ENCODE measurements at regions of chr2 and their contacts with region 1.

Region 1: GRCh38 chr2:45024600-45025291 is 15.5 kb upstream of the SIX2 start:
- DNase-seq: no peak
- H3K4me3 ChIP-seq: no peak overlapping the region
- H3K27ac ChIP-seq: no peak overlapping the region
- H3K4me1 ChIP-seq: peaks cover 0 to 4% (median 0%) of the 10 kb centered on the region in 4 experiments; a peak in 1 of 7 replicates
- H3K27me3 ChIP-seq: peaks cover 0 to 2% (median 0%) of the 10 kb centered on the region in 4 experiments; a peak in 3 of 7 replicates
- CTCF ChIP-seq: peak in 1 of 3 experiments; percentile 16; a peak in 1 of 4 replicates
- EP300 ChIP-seq: no peak
- POLR2A ChIP-seq: no peak
- RAD21 ChIP-seq: peak; percentile 41 to 43; a peak in 3 of 4 replicates

Region 2: DNA sequence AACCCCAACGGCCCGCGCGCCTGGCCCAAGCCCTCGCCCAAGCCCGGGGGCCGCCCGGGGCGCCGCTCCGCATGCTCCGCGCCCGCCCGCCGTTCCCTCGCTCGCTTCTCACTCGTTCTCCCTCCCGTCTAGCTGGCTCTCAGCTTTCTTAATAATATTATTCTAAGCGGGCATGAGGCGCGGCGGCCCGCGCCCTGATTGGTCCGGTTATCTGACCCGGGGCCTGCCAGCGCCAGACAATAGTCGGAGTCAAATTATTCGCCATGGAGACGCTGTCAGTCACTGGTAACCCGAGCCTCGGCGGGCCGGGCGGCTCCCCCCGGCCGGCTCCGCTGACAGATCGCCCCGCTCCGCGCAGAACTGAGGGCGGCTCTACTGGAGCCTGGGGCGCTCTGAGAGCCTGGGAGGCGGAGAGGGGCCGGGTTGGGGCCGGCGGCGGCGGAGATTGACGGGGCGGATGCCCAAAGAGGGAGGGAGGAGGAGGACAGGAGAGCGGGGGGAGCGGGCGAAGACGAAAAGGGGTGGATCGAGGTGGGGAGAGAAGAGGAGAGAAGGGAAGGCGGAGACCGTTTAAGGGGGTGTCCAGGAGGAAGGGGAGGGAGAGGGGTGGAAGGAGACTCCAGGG is 15.3 kb before region 1 on chr2 and contains the start of gene SIX2:
- CTCF ChIA-PET with region 1: interaction called, 12 read pairs
- POLR2A ChIA-PET with region 1: interaction called, 3 read pairs
- DNase-seq: peak; percentile 92 to 93
- H3K4me3 ChIP-seq: peak within 1 kb of the TSS; percentile 27 to 64 (median 36)
- H3K27ac ChIP-seq: no peak within 1 kb of the TSS
- H3K4me1 ChIP-seq: peaks cover 0 to 33% (median 16%) of the 10 kb centered on the region in 4 experiments; a peak in 5 of 7 replicates
- H3K27me3 ChIP-seq: peaks cover 75 to 90% (median 86%) of the 10 kb centered on the region in 4 experiments
- CTCF ChIP-seq: no peak
- EP300 ChIP-seq: peak in 1 of 2 experiments; percentile 54; a peak in 1 of 3 replicates
- POLR2A ChIP-seq: no peak
- RAD21 ChIP-seq: no peak; a peak in 1 of 4 replicates
- total RNA-seq, gene SIX2: 0.84 and 1.0 TPM in 2 replicates

Region 3: GRCh38 chr2:45040786-45041185 is 16.0 kb after region 1 on chr2:
- CTCF ChIA-PET with region 1: interaction called, 19 read pairs
- POLR2A ChIA-PET with region 1: no interaction called
- DNase-seq: no peak
- H3K4me3 ChIP-seq: no peak overlapping the region
- H3K27ac ChIP-seq: no peak overlapping the region
- H3K4me1 ChIP-seq: no peaks in the 10 kb centered on the region
- H3K27me3 ChIP-seq: no peaks in the 10 kb centered on the region
- CTCF ChIP-seq: no peak
- EP300 ChIP-seq: no peak
- POLR2A ChIP-seq: no peak
- RAD21 ChIP-seq: no peak

Region 4: GRCh38 chr2:45145073-45145899 is 120.5 kb after region 1 on chr2:
- CTCF ChIA-PET with region 1: no interaction called
- POLR2A ChIA-PET with region 1: no interaction called
- DNase-seq: no peak
- H3K4me3 ChIP-seq: no peak overlapping the region
- H3K27ac ChIP-seq: no peak overlapping the region
- H3K4me1 ChIP-seq: peaks cover 0 to 4% (median 2%) of the 10 kb centered on the region in 4 experiments; a peak in 3 of 7 replicates
- H3K27me3 ChIP-seq: no peaks in the 10 kb centered on the region; a peak in 2 of 7 replicates
- CTCF ChIP-seq: no peak
- EP300 ChIP-seq: no peak
- POLR2A ChIP-seq: no peak
- RAD21 ChIP-seq: no peak

Measured in H1 (cell line).